Endothelial cell of umbilical vein (primary cell): ENCODE measurements at regions of chr5 and their contacts with region 1.

Region 1: GRCh38 chr5:154368041-154368800 is 77.6 kb upstream of the SAP30L start:
- DNase-seq: peak; percentile 86
- H3K4me3 ChIP-seq: peak overlapping the region in 1 of 3 experiments; percentile 59
- H3K27ac ChIP-seq: peak overlapping the region; percentile 97
- H3K4me1 ChIP-seq: peaks cover 52% of the 10 kb centered on the region
- H3K27me3 ChIP-seq: no peaks in the 10 kb centered on the region
- CTCF ChIP-seq: no peak
- POLR2A ChIP-seq: no peak

Region 2: DNA sequence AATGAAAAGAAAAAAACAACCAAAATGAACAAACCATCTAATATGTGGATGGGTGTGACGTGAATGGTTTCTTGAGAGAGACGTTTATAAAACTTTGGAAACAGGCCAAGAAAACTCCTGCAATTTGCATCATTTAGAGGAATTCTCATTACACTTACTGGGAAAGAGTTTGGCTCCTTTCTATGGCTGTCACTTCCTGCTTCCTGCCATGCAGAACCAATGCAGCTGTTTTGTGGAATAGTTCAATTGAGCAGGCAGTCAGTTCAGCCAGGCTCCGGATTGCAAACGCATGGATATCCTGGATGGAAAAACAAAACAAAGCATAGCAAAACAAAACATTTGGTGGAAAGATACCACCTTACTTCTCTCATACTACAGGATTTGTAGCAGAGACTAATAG is 366.1 kb before region 1 on chr5:
- CTCF ChIA-PET with region 1: no interaction called
- POLR2A ChIA-PET with region 1: no interaction called
- dilution Hi-C with region 1: no loop called
- intact Hi-C with region 1: loop called (anchors 1 kb)
- DNase-seq: peak; percentile 87
- H3K4me3 ChIP-seq: no peak overlapping the region
- H3K27ac ChIP-seq: peak overlapping the region; percentile 86
- H3K4me1 ChIP-seq: peaks cover 17% of the 10 kb centered on the region
- H3K27me3 ChIP-seq: no peaks in the 10 kb centered on the region
- CTCF ChIP-seq: no peak
- POLR2A ChIP-seq: no peak

Region 3: DNA sequence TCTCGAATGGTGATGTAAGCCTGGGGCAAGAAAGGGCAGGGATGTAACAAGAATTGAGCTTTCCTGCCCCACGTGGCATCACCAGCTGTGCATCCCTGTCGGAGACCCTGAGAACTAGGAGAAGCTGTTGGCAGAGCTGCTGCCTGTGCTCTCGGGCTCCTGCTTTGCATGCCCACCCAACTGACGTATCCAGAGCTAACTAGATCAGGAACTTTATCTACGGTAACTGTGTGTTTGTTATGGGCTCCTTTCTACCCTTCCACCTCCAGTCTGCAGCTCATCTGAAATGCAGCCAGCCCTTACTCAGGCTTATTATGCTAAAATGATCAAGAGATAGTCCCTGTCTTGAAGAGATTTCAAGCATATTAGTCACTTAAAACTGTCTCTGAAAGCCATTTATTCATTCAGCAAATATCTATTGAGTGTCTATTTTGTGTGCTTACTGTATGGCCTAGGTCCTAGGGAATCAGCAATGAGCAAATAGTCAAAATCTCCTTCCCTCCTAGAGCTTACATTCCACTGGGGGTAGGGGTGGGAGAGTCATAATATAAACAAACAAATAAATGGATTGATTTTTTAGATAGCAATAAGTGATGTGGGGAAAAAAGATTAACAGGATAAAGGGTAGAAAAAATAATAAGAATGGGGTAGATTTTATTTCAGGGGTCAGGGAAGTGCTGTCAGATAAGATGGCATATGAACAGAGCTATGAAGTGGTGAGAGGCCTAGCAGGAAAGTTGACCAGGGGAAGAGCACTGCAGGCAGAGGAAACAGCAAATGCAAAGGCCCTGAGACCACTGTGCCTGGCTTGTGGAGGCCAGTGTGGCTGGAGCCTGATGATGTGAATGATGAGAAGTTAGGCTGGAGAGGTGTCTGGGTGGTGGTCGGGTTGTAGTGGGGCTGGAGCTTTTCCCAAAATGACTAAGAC is 59.5 kb before region 1 on chr5:
- CTCF ChIA-PET with region 1: no interaction called
- POLR2A ChIA-PET with region 1: no interaction called
- dilution Hi-C with region 1: no loop called
- intact Hi-C with region 1: loop called (anchors 1 kb)
- DNase-seq: peak; percentile 45
- H3K4me3 ChIP-seq: no peak overlapping the region
- H3K27ac ChIP-seq: peak overlapping the region; percentile 72
- H3K4me1 ChIP-seq: peaks cover 37% of the 10 kb centered on the region
- H3K27me3 ChIP-seq: no peaks in the 10 kb centered on the region
- CTCF ChIP-seq: no peak
- POLR2A ChIP-seq: no peak

Region 4: GRCh38 chr5:154390096-154390495 is 21.9 kb after region 1 on chr5:
- CTCF ChIA-PET with region 1: interaction called, 5 read pairs
- POLR2A ChIA-PET with region 1: interaction called, 4 read pairs
- dilution Hi-C with region 1: no loop called
- intact Hi-C with region 1: loop called (anchors 1 kb)
- DNase-seq: peak; percentile 71
- H3K4me3 ChIP-seq: no peak overlapping the region
- H3K27ac ChIP-seq: peak overlapping the region; percentile 54
- H3K4me1 ChIP-seq: peaks cover 6% of the 10 kb centered on the region
- H3K27me3 ChIP-seq: no peaks in the 10 kb centered on the region
- CTCF ChIP-seq: no peak
- POLR2A ChIP-seq: no peak

Region 5: GRCh38 chr5:154445422-154446182 is 77.4 kb after region 1 on chr5 and contains the start of gene SAP30L:
- CTCF ChIA-PET with region 1: no interaction called
- POLR2A ChIA-PET with region 1: no interaction called
- dilution Hi-C with region 1: no loop called
- intact Hi-C with region 1: loop called (anchors 5 kb)
- DNase-seq: peak; percentile 97
- H3K4me3 ChIP-seq: peak within 1 kb of the TSS; percentile 82 to 98 (median 93)
- H3K27ac ChIP-seq: peak within 1 kb of the TSS; percentile 24
- H3K4me1 ChIP-seq: peaks cover 16% of the 10 kb centered on the region
- H3K27me3 ChIP-seq: no peaks in the 10 kb centered on the region
- CTCF ChIP-seq: no peak
- POLR2A ChIP-seq: peak; percentile 50
- total RNA-seq, gene SAP30L: 37.6 and 37.8 TPM in 2 replicates